Psoas muscle (tissue), 8 donors: ENCODE measurements at regions of chr1 and their contacts with region 1.

Region 1: GRCh38 chr1:53625049-53625448 is 113.9 kb downstream of the GLIS1 start:
- DNase-seq: peak; percentile 59 to 65
- ATAC-seq: peak; percentile 23 to 82 (median 54)
- H3K4me3 ChIP-seq: no peak overlapping the region
- H3K27ac ChIP-seq: no peak overlapping the region
- H3K4me1 ChIP-seq: no peaks in the 10 kb centered on the region
- H3K27me3 ChIP-seq: no peaks in the 10 kb centered on the region
- CTCF ChIP-seq: no peak

Region 2: DNA sequence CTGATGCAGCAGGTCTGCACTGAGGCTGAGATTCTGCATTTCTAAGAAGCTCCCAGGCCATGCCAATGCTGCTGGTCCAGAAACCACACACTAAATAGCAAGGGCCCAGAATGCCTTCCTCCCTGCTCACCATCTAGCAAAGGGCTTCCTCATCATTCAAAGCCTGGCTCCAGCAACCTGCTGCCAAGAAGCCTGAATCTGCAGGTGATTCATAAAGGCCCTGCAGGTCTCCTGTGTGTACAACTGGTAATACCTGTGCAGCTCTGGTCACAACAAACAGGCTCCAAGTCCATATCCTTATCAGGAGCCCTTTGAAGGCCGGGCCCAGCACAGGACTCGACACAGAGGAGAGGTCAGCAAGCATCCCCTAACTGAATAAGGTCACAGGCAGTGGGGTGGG is 87.2 kb after region 1 on chr1:
- intact Hi-C with region 1: loop called in 1 of 2 experiments (anchors 5 kb)
- DNase-seq: no peak
- ATAC-seq: no peak
- H3K4me3 ChIP-seq: no peak overlapping the region
- H3K27ac ChIP-seq: no peak overlapping the region
- H3K4me1 ChIP-seq: no peaks in the 10 kb centered on the region
- H3K27me3 ChIP-seq: peaks cover 0 to 17% (median 0%) of the 10 kb centered on the region in 3 donors
- CTCF ChIP-seq: no peak